ENCODE measurements at regions of chr1 and their contacts with region 1.

Region 1: DNA sequence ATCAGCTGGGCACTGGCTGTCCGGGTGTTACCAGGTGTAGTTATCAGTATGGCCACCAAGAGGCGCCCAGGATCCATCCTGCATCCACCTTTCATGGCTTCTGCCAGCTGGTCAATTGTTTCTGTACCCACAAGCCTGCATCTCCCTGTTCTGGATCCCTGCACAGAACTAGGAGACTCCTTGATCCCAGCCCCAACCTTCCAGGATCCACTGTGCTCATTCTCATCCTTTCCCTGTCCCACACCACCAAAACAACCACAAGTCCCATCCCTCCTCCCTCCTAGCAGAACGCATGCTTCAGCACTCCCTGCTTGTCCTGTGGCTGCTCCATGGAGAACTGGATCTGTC is 27.2 kb upstream of the FOXE3 start:
- DNase-seq: peak; percentile 73
- CTCF ChIP-seq: peak; percentile 56

Region 2: GRCh38 chr1:47192458-47193384 is 196.1 kb before region 1 on chr1:
- CTCF ChIA-PET with region 1: interaction called, 11 read pairs
- POLR2A ChIA-PET with region 1: no interaction called
- DNase-seq: peak; percentile 79
- CTCF ChIP-seq: peak; percentile 98

Region 3: DNA sequence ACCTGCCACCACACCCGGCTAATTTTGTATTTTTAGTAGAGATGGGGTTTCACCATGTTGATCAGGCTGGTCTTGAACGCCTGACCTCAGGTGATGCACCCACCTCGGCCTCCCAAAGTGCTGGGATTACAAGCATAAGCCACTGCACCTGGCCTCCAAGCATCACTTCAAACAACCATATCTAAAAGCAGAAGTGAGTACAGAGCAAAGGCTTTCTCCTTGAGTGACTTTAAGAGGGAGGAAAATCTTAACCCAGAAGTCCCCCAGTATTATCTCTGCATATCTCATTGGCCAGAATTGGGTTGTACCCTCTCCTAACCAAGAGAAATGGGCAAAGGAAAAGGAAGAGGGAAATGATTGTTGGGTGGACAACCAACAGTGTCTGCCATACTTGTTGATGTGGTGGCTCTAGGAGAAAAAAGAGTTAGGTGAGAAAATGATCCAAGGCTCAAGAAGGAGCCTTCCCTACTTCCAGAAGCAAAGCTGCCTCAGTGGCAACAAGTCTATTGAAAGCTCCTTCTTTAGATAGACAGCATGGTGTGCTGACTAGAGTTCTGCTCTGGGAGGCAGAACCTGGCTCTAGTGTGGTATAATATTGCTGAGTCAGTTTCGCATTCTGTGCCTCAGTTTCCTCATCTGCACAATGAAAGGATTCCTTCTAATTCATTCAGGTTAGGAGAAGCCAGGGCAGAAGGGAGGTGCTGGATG is 10.4 kb after region 1 on chr1:
- CTCF ChIA-PET with region 1: interaction called, 20 read pairs
- POLR2A ChIA-PET with region 1: no interaction called
- DNase-seq: no peak
- CTCF ChIP-seq: no peak

Region 4: GRCh38 chr1:47432071-47433036 is 43.5 kb after region 1 on chr1:
- CTCF ChIA-PET with region 1: interaction called, 41 read pairs
- POLR2A ChIA-PET with region 1: no interaction called
- DNase-seq: peak; percentile 66
- CTCF ChIP-seq: peak; percentile 65

Region 5: GRCh38 chr1:47725992-47726855 is 337.4 kb after region 1 on chr1:
- CTCF ChIA-PET with region 1: interaction called, 37 read pairs
- POLR2A ChIA-PET with region 1: no interaction called
- DNase-seq: peak; percentile 81
- CTCF ChIP-seq: peak; percentile 85